MCF 10A (cell line): ENCODE measurements at regions of chr9 and their contacts with region 1.

Region 1: DNA sequence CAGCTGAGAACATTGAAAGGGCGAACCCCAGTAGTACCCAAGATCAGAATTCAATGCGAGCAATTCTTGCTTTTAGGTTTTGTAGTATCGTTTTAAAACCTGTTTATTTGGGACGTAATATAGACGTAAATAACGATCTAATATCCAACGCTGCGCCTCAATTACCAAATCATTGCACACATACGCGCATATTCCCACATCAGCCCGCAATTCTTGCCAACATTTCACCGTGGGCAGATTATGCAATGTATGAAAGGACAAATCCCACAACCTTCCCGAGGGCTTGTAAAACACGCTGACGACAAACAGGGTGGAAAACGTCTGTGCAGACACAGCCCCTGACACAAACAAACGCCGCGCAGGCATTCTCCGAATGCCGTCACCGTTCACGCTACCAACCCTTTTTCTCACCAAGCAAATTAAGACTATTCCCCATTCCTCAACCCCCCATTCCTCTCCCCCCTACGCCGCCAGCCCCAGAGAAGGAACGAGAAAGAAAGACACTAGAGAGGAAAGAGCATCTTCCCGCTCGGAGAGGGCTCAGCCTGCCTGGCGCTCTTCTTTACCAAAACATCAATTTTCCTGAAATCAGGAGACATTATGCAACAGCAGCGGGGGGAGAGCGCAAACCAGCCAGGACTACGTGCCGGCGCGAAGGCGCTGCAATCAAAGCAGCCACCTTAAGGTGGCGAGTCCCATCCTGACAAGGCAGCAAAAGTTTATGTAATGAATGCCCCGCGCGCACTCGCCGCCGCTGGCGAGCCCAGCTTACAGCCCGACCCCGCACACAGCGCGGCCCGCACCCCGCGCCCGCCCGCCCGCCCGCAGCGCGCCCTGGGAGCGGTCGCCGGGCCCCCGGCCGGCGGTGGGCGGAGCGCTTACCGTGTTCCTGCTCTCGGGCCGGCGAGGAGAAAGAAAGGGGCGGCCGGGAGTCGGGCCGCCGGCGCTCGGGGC is 597 bp downstream of the NFIL3 start:
- DNase-seq: peak; percentile 83
- H3K4me3 Mint-ChIP-seq: peak overlapping the region; percentile 100
- H3K27ac Mint-ChIP-seq: peak overlapping the region; percentile 99
- H3K4me1 Mint-ChIP-seq: peaks cover 41% of the 10 kb centered on the region
- H3K27me3 Mint-ChIP-seq: no peaks in the 10 kb centered on the region
- CTCF ChIP-seq: peak; percentile 24

Region 2: DNA sequence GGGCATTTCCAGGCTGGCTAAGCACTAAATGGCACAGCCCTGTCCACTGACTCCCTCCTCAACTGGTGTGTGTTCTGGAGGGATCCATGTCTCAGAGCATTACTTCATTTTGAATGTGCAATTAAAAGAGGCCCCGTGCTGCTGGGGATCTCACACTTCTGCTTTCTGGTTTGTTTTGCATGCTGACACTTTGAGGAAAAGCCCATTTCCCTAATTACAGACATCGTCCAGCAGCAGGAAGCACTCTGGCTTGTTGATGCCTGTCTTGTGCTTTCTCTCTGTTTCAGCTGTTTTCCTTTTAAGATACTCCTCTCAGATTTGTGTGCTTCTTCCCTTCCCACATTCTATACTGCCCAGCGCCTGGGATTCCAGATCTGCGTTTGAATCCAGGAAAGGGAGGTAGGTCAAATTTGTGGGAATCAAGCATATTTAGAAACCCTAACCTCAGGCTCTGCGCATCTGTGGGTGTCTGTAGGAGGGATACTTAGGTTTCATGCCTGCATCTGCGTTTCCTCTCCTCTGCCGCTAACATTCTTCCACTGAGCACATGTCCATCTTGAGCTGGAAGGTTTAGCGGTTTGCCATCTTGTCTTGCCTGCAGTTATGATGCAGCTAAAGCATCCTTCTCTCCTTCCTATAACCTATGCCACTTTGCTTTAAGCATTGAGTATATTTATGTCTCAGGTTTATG is 595.7 kb before region 1 on chr9:
- CTCF ChIA-PET with region 1: no interaction called
- POLR2A ChIA-PET with region 1: no interaction called
- intact Hi-C with region 1: no loop called
- DNase-seq: no peak
- H3K4me3 Mint-ChIP-seq: no peak overlapping the region
- H3K27ac Mint-ChIP-seq: no peak overlapping the region
- H3K4me1 Mint-ChIP-seq: no peaks in the 10 kb centered on the region
- H3K27me3 Mint-ChIP-seq: no peaks in the 10 kb centered on the region
- CTCF ChIP-seq: no peak

Region 3: DNA sequence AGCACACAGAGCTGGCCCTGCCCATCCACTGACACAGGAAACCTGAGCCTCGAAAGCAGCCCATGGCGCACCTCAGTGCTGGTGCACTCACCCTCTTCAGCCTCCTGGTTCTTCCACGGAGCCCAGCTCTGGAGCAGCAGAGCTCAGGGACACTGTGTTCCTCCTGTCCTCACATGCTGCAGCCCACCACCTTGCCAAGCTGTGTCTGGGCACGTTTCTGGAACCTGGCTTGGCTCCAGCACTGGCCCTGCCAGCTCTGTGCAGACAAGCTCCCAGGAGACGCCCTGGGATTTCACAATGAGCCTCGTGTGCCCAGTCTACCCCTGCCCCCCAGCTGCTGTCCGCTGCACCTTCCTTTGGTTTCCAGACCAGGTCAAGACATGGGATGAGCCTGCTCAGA is 501.9 kb before region 1 on chr9:
- CTCF ChIA-PET with region 1: interaction called, 68 read pairs
- POLR2A ChIA-PET with region 1: interaction called, 31 read pairs
- intact Hi-C with region 1: no loop called
- DNase-seq: peak; percentile 98
- H3K4me3 Mint-ChIP-seq: peak overlapping the region; percentile 26
- H3K27ac Mint-ChIP-seq: peak overlapping the region; percentile 83
- H3K4me1 Mint-ChIP-seq: peaks cover 55% of the 10 kb centered on the region
- H3K27me3 Mint-ChIP-seq: no peaks in the 10 kb centered on the region
- CTCF ChIP-seq: no peak

Region 4: DNA sequence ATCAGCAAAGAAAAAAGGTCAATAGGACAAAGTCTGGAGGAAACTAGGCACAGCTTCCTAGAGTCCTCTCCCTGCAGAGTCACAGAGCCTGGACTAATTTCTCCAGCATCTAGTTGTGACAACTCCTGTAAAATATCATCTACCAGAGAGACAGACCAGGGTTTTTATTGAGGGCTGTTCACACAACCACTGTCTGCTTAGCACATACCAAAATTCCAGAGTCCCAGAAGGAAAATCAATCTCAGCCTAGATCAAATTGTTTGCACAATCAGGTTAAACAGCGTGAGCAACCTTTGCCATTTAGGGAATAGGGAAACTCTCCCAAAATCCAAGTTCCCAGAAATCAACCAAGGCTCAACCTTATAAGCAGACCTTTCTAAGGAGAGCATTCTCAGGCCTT is 431.1 kb before region 1 on chr9:
- CTCF ChIA-PET with region 1: interaction called, 4 read pairs
- POLR2A ChIA-PET with region 1: interaction called, 12 read pairs
- intact Hi-C with region 1: loop called (anchors 2 kb)
- DNase-seq: peak; percentile 39
- H3K4me3 Mint-ChIP-seq: no peak overlapping the region
- H3K27ac Mint-ChIP-seq: peak overlapping the region; percentile 59
- H3K4me1 Mint-ChIP-seq: peaks cover 56% of the 10 kb centered on the region
- H3K27me3 Mint-ChIP-seq: no peaks in the 10 kb centered on the region
- CTCF ChIP-seq: no peak

Region 5: DNA sequence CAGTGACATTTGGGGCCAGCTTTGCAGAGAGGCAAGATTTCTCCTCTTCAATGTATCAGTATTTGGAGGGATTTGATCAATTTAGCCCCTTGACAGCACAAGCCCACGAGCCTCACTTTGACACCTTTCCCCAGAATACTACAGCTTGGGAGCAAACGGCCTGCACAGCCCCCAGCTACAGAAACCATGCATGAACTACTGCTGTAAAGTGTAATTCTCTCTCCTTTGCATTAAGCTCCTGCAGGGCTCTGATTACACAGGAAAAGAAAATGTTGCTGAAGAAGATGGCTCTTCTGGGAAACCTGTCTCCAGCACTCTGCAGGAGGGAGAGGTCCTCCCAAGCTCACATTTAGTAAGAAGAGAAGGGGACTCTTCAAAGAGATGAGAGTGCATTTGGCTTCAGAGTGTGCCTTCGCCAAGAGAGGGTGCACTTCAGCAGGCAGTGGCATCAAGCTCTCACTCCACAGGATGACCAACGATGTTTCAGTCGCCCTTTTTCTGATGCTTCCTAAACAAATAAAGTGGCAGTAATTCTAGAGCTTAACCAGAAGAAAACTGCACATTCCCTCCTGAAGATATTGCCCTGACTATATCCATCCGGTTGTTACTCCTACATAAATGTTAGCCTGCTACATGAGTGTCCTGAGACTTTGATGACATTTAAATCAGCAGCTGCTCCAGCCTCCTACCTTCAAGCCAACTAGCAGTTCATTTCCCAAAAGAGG is 333.5 kb before region 1 on chr9:
- CTCF ChIA-PET with region 1: interaction called, 15 read pairs
- POLR2A ChIA-PET with region 1: interaction called, 5 read pairs
- intact Hi-C with region 1: loop called (anchors 1 kb)
- DNase-seq: peak; percentile 67
- H3K4me3 Mint-ChIP-seq: no peak overlapping the region
- H3K27ac Mint-ChIP-seq: peak overlapping the region; percentile 12
- H3K4me1 Mint-ChIP-seq: peaks cover 21% of the 10 kb centered on the region
- H3K27me3 Mint-ChIP-seq: no peaks in the 10 kb centered on the region
- CTCF ChIP-seq: peak; percentile 51

Region 6: DNA sequence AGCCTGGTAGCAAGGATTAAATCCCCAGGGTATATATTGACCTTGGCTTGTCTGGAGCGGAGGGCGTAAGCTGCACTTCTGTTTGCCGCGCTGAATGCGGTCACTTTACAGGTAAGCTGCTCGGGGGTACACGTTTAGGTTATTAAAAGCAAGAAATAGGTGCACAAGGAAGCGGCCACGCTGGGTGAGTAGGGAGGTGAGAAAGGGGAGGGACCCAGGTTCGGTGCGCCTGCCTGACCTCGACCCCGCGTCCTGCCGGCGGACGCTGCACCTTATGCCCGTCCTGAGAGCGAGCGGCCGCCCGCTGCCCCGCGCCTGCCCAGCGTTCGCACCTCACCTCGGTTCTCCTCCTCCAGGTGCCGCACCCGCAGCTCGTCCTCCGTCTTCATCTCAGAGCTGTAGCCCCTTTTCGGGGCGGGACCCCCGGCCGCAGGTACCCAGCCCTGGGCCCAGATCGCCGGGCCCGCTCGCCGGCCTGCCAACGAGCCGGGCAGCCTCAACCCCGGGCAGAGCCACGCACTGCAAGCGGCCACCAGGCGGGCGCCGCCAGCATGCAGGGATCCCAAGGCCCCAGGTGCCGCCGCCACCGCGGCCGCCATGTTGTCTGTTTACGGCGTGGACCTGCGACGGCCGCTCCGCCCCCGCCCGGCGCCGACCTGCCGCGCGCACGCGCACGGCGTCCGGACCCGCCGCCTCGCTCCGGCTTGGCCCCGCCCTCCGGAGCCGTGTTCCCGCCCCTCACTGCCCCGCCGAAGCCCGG is 61.6 kb before region 1 on chr9 and contains the start of gene AUH:
- CTCF ChIA-PET with region 1: interaction called, 7 read pairs
- POLR2A ChIA-PET with region 1: interaction called, 124 read pairs
- intact Hi-C with region 1: loop called (anchors 1 kb)
- DNase-seq: peak; percentile 75
- H3K4me3 Mint-ChIP-seq: peak within 1 kb of the TSS; percentile 93
- H3K27ac Mint-ChIP-seq: peak within 1 kb of the TSS; percentile 98
- H3K4me1 Mint-ChIP-seq: peaks cover 38% of the 10 kb centered on the region
- H3K27me3 Mint-ChIP-seq: no peaks in the 10 kb centered on the region
- CTCF ChIP-seq: no peak
- total RNA-seq, gene AUH: 16.1 and 20.9 TPM in 2 replicates

Region 7: GRCh38 chr9:91433180-91433579 is 10.1 kb after region 1 on chr9:
- CTCF ChIA-PET with region 1: interaction called, 9 read pairs
- POLR2A ChIA-PET with region 1: interaction called, 23 read pairs
- intact Hi-C with region 1: no loop called
- DNase-seq: peak; percentile 88
- H3K4me3 Mint-ChIP-seq: no peak overlapping the region
- H3K27ac Mint-ChIP-seq: no peak overlapping the region
- H3K4me1 Mint-ChIP-seq: peaks cover 27% of the 10 kb centered on the region
- H3K27me3 Mint-ChIP-seq: no peaks in the 10 kb centered on the region
- CTCF ChIP-seq: peak; percentile 45

Region 8: DNA sequence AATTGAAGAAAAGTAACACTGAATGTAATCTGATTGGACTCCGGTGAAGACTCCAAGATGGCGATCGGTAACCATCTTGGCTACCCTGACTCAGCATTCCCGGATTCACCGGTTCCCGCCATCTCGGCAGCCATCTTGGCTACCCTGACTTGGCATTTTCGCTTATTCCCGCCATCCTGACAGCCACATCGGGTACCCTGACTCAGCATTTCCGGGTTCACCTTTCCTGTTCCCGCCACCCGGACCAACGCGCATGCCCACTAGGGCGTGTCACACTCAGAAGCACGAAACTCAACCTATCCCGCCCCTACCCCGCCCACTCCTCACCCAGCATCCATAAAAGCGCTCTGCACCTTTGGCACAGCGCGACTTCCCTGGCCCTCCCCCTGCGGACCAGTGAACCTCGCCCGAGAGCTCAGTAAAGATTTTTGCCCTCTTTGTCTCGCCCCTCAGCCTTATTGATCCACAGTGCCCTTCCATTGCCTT is 675.0 kb after region 1 on chr9:
- CTCF ChIA-PET with region 1: no interaction called
- POLR2A ChIA-PET with region 1: no interaction called
- intact Hi-C with region 1: no loop called
- DNase-seq: peak; percentile 89
- H3K4me3 Mint-ChIP-seq: peak overlapping the region; percentile 24
- H3K27ac Mint-ChIP-seq: no peak overlapping the region
- H3K4me1 Mint-ChIP-seq: peaks cover 26% of the 10 kb centered on the region
- H3K27me3 Mint-ChIP-seq: no peaks in the 10 kb centered on the region
- CTCF ChIP-seq: no peak